ENCODE measurements at regions of chr15 and their contacts with region 1.

Region 1: GRCh38 chr15:68061171-68061570 is 7.1 kb downstream of the PIAS1 start:
- DNase-seq: no peak
- H3K4me3 ChIP-seq: no peak overlapping the region
- H3K27ac ChIP-seq: no peak overlapping the region
- H3K4me1 ChIP-seq: peaks cover 0 to 72% (median 52%) of the 10 kb centered on the region in 4 donors
- H3K27me3 ChIP-seq: no peaks in the 10 kb centered on the region
- CTCF ChIP-seq: no peak
- EP300 ChIP-seq: no peak
- POLR2A ChIP-seq: no peak

Region 2: GRCh38 chr15:68143129-68143528 is 82.0 kb after region 1 on chr15:
- intact Hi-C with region 1: loop called (anchors 5 kb)
- DNase-seq: no peak
- H3K4me3 ChIP-seq: no peak overlapping the region
- H3K27ac ChIP-seq: no peak overlapping the region
- H3K4me1 ChIP-seq: no peaks in the 10 kb centered on the region
- H3K27me3 ChIP-seq: no peaks in the 10 kb centered on the region
- CTCF ChIP-seq: no peak
- EP300 ChIP-seq: no peak
- POLR2A ChIP-seq: no peak